HCT116 (cell line): ENCODE measurements at regions of chr9 and their contacts with region 1.

Region 1: GRCh38 chr9:98686961-98687855 is 21.5 kb downstream of the GABBR2 start:
- DNase-seq: no peak
- ATAC-seq: no peak
- H3K4me3 ChIP-seq: no peak overlapping the region
- H3K27ac ChIP-seq: no peak overlapping the region
- H3K4me1 ChIP-seq: no peaks in the 10 kb centered on the region
- H3K27me3 ChIP-seq: no peaks in the 10 kb centered on the region; the same call in none of the 2 replicates
- CTCF ChIP-seq: no peak
- POLR2A ChIP-seq: no peak
- RAD21 ChIP-seq: no peak

Region 2: GRCh38 chr9:98825414-98825813 is 138.2 kb after region 1 on chr9:
- CTCF ChIA-PET with region 1: no interaction called
- POLR2A ChIA-PET with region 1: no interaction called
- RAD21 ChIA-PET with region 1: interaction called in 1 of 2 experiments, 10 read pairs
- intact Hi-C with region 1: no loop called
- DNase-seq: no peak
- ATAC-seq: no peak
- H3K4me3 ChIP-seq: no peak overlapping the region
- H3K27ac ChIP-seq: no peak overlapping the region
- H3K4me1 ChIP-seq: no peaks in the 10 kb centered on the region
- H3K27me3 ChIP-seq: no peaks in the 10 kb centered on the region
- CTCF ChIP-seq: no peak
- POLR2A ChIP-seq: no peak
- RAD21 ChIP-seq: no peak